K562 (cell line): ENCODE measurements at regions of chr2 and their contacts with region 1.

Region 1: DNA sequence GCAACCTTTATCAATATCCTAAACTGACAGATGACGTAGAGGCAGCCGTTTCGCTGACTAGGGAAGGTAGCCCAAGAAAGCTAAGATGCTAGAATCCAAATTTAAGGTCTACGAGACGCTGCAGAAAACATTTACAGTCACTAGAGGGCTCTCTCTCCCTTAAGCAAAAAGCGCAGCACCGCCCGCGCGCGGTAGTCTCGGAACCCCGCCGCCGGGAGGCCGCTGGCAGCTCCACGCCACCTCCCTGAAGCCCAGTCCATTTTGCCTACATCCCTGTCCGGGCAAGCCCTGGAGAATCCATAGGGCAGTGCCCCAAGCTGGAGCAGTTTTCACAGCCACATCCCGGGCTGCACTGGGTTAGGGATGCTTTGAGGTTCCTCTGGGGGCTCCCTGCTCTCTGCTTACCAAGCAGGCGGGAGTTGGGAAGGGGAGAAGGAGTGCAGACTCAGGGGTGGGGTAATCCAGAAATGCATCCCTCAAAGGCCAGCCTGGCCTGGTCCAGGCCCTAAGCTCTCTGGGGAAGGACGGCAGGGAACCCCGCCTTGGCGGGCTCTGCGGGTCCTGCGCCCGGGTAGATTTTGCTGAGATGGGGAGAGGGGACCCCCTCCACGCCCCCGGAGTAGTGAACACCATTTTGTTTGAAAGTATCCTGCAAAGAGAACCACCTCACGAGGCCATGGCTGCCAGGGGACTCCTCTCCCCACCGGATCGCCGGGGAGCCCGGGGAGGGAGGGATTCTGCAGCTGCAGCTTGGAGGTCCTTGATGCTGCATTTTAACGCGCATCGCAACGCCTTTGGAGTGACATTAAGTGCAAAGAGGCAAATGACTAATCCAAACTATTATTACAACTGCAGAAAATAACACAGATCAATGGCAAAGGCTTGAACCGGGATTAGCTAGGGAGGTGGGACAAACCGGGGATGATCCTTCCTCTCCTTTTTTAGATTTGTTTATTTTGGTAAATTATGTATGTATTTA is 1.3 kb upstream of the DPYSL5 start:
- DNase-seq: peak; percentile 64 to 83 (median 68)
- ATAC-seq: peak; percentile 94
- H3K4me3 ChIP-seq: no peak overlapping the region
- H3K27ac ChIP-seq: no peak overlapping the region
- H3K4me1 ChIP-seq: peaks cover 0 to 35% of the 10 kb centered on the region in 2 experiments; a peak in 2 of 5 replicates
- H3K27me3 ChIP-seq: peaks cover 49 to 70% of the 10 kb centered on the region in 2 experiments
- CTCF ChIP-seq: peak; percentile 86 to 96 (median 96)
- EP300 ChIP-seq: no peak
- POLR2A ChIP-seq: no peak
- RAD21 ChIP-seq: peak; percentile 89 to 90

Region 2: GRCh38 chr2:26577434-26578112 is 269.0 kb before region 1 on chr2:
- CTCF ChIA-PET with region 1: no interaction called
- POLR2A ChIA-PET with region 1: no interaction called
- in situ Hi-C with region 1: no loop called
- intact Hi-C with region 1: no loop called
- DNase-seq: peak; percentile 74 to 79 (median 78)
- ATAC-seq: peak; percentile 92
- H3K4me3 ChIP-seq: no peak overlapping the region
- H3K27ac ChIP-seq: no peak overlapping the region
- H3K4me1 ChIP-seq: no peaks in the 10 kb centered on the region; a peak in 1 of 5 replicates
- H3K27me3 ChIP-seq: peaks cover 39 to 96% of the 10 kb centered on the region in 2 experiments
- CTCF ChIP-seq: peak; percentile 89 to 94 (median 92)
- EP300 ChIP-seq: no peak
- POLR2A ChIP-seq: no peak
- RAD21 ChIP-seq: peak; percentile 88 to 92

Region 3: DNA sequence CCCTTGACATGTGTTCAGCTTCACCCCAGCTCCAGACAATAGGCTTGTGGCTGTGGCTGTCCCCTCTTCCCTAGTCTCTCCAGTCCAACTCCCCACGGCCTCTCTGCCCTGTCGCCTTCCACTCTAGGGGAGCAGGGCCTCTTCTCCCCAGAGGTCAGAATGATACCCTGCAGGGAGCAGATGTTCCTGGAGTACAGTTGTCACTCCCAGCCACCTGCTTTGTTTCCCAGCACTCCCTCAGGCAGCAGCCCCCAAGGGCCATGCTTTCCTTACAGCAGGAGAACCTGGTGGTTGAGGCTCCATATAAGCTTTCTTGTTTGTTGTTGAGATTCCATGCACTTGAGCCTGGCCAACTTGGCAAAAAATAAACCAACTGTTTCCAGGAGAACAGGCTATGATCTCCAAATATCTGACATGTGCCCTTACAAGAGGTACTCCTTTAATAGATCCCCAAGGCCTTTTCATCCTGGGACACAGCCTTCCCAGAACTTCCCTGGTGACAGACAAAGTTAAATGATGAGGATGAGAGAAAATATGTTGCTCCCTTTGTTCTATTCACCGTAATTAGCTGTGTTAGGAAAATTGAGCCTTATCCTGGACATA is 46.4 kb after region 1 on chr2:
- CTCF ChIA-PET with region 1: no interaction called
- POLR2A ChIA-PET with region 1: no interaction called
- in situ Hi-C with region 1: no loop called
- intact Hi-C with region 1: no loop called
- DNase-seq: no peak
- ATAC-seq: no peak
- H3K4me3 ChIP-seq: no peak overlapping the region
- H3K27ac ChIP-seq: no peak overlapping the region
- H3K4me1 ChIP-seq: no peaks in the 10 kb centered on the region
- H3K27me3 ChIP-seq: peaks cover 24 to 30% of the 10 kb centered on the region in 2 experiments; a peak in 4 of 5 replicates
- CTCF ChIP-seq: no peak
- EP300 ChIP-seq: no peak
- POLR2A ChIP-seq: no peak
- RAD21 ChIP-seq: no peak

Region 4: DNA sequence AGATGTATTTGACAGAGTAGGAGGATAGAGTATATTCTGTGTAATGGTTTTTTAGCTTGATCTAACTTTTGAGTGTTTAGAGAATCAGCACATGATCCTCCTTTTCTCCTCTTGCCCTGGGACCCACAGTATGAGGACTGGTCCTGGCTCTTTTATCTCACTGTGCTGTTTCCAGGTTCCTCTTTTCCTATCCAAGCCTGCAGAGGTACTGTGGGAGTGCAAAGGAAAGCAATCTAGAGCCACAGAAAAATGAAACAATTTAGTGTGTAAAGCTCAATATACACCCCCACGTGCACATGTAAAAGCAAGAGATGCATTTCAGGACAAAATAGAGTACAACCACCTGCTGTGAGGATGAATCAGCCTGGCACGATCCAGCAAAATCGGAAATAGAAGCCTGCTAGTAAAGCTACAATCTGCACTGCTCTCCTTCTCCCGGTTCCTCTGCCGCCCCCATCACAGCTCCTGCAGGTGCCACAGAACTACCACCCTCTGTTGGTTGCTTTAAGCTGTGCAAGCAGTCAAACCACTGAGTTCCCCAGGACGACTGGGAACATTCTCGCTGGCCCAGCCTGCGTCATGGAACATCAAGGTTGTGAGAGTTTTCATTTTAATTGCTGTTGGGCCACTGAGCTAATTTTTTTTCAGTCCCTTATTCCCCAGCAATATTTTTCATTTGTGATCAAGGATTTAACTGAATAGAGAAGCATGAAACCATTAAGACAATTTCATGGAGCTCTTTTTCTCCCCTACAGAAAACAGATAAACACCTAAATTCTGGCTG is 76.0 kb after region 1 on chr2:
- CTCF ChIA-PET with region 1: interaction called, 4 read pairs
- POLR2A ChIA-PET with region 1: interaction called, 6 read pairs
- in situ Hi-C with region 1: no loop called
- intact Hi-C with region 1: loop called (anchors 5 kb)
- DNase-seq: peak; percentile 54 to 69 (median 58)
- ATAC-seq: peak; percentile 96
- H3K4me3 ChIP-seq: no peak overlapping the region
- H3K27ac ChIP-seq: no peak overlapping the region
- H3K4me1 ChIP-seq: no peaks in the 10 kb centered on the region
- H3K27me3 ChIP-seq: peaks cover 37 to 43% of the 10 kb centered on the region in 2 experiments
- CTCF ChIP-seq: peak; percentile 64 to 87 (median 70)
- EP300 ChIP-seq: no peak
- POLR2A ChIP-seq: no peak
- RAD21 ChIP-seq: peak; percentile 38 to 60

Region 5: DNA sequence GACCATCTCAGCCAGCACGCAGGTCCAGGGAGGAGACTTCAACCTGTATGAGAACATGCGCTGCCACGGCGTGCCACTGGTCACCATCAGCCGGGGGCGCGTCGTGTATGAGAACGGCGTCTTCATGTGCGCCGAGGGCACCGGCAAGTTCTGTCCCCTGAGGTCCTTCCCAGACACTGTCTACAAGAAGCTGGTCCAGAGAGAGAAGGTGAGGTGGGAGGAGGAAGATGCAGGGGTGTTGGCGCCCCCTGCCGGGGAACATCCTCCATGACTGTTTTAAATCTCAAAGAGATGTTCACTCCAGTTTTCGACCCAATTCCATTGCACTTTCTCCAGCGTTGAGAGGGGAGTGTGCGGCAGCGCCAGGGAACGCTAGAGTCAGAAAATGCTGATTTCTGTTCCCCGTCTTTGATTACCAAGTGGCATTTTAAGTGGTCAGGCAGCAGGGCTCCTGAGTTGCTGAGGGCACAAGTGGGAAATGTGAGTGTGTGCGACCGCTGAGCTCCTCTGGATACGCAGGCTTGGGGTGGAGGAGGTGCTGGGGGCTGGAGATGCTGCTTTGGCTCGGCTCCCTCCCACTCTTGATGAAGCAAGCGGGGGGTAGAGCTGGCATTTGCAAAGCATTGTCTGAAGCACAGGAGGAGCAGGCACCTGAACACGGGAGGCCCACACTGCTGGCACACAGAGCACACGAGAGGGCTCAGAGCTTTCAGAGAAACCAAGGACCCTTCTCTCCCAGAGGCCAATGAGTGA is 96.1 kb after region 1 on chr2:
- CTCF ChIA-PET with region 1: interaction called, 19 read pairs
- POLR2A ChIA-PET with region 1: no interaction called
- in situ Hi-C with region 1: loop called (anchors 10 kb)
- intact Hi-C with region 1: loop called (anchors 1 kb)
- DNase-seq: peak; percentile 82 to 84 (median 84)
- ATAC-seq: peak; percentile 83
- H3K4me3 ChIP-seq: no peak overlapping the region
- H3K27ac ChIP-seq: no peak overlapping the region
- H3K4me1 ChIP-seq: peaks cover 0 to 21% of the 10 kb centered on the region in 2 experiments; a peak in 4 of 5 replicates
- H3K27me3 ChIP-seq: peaks cover 11 to 40% of the 10 kb centered on the region in 2 experiments; a peak in 4 of 5 replicates
- CTCF ChIP-seq: peak; percentile 84 to 94 (median 89)
- EP300 ChIP-seq: no peak
- POLR2A ChIP-seq: no peak
- RAD21 ChIP-seq: peak; percentile 61 to 84

Region 6: GRCh38 chr2:27079233-27080139 is 232.9 kb after region 1 on chr2:
- CTCF ChIA-PET with region 1: no interaction called
- POLR2A ChIA-PET with region 1: no interaction called
- in situ Hi-C with region 1: no loop called
- intact Hi-C with region 1: loop called (anchors 2 kb)
- DNase-seq: no peak
- ATAC-seq: no peak
- H3K4me3 ChIP-seq: no peak overlapping the region
- H3K27ac ChIP-seq: no peak overlapping the region
- H3K4me1 ChIP-seq: peaks cover 63 to 65% of the 10 kb centered on the region in 2 experiments
- H3K27me3 ChIP-seq: no peaks in the 10 kb centered on the region
- CTCF ChIP-seq: no peak
- EP300 ChIP-seq: no peak
- POLR2A ChIP-seq: no peak
- RAD21 ChIP-seq: no peak

Region 7: DNA sequence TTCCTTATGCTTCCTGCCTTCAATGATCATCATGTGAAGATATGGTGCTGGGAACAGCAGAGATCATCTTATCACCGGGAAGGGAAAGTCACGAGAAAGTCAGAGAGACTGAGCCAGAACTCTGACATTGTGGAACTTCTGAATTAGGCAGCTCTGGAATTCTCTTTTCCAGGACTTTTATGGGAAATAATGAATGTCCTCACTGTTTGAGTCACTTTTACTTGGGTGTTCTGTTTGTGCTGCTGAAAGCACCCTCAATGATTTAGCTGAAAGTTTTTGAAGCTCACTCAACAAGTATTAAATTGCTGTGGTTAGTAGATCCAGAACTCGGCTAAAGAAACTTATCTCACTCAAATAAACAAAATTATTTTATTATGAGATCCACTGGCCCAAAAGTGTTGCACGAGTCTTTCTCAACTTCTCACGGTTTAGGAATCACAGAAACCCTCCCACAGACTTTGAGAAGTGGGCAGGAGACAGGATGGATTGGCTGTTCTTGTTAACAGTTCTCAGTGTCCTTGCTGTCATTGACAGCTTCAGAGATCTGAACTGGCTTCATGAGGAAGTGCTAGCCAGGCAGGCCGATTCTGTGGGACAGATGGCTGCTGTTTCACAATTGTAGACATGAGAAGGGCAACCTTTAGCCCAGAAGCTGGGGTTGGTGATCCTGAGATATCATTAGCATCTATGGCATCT is 338.9 kb after region 1 on chr2:
- CTCF ChIA-PET with region 1: no interaction called
- POLR2A ChIA-PET with region 1: no interaction called
- in situ Hi-C with region 1: no loop called
- intact Hi-C with region 1: loop called (anchors 10 kb)
- DNase-seq: peak in 2 of 4 experiments; percentile 11 to 35
- ATAC-seq: peak; percentile 67
- H3K4me3 ChIP-seq: no peak overlapping the region
- H3K27ac ChIP-seq: peak overlapping the region; percentile 17; the same call in 1 of the 3 replicates
- H3K4me1 ChIP-seq: peaks cover 0 to 10% of the 10 kb centered on the region in 2 experiments; a peak in 3 of 5 replicates
- H3K27me3 ChIP-seq: peaks cover 0 to 4% of the 10 kb centered on the region in 2 experiments; a peak in 1 of 5 replicates
- CTCF ChIP-seq: no peak
- EP300 ChIP-seq: no peak
- POLR2A ChIP-seq: no peak
- RAD21 ChIP-seq: no peak

Region 8: GRCh38 chr2:27281855-27282559 is 435.4 kb after region 1 on chr2 and contains the start of gene TRIM54:
- CTCF ChIA-PET with region 1: interaction called, 7 read pairs
- POLR2A ChIA-PET with region 1: no interaction called
- in situ Hi-C with region 1: no loop called
- intact Hi-C with region 1: loop called (anchors 10 kb)
- DNase-seq: no peak
- ATAC-seq: peak; percentile 37; the same call in 1 of the 3 replicates
- H3K4me3 ChIP-seq: no peak within 1 kb of the TSS
- H3K27ac ChIP-seq: no peak within 1 kb of the TSS
- H3K4me1 ChIP-seq: peaks cover 6 to 17% of the 10 kb centered on the region in 2 experiments
- H3K27me3 ChIP-seq: peaks cover 0 to 4% of the 10 kb centered on the region in 2 experiments; a peak in 1 of 5 replicates
- CTCF ChIP-seq: no peak
- EP300 ChIP-seq: no peak
- POLR2A ChIP-seq: no peak
- RAD21 ChIP-seq: no peak
- polyA plus RNA-seq, gene TRIM54: not detected

Region 9: DNA sequence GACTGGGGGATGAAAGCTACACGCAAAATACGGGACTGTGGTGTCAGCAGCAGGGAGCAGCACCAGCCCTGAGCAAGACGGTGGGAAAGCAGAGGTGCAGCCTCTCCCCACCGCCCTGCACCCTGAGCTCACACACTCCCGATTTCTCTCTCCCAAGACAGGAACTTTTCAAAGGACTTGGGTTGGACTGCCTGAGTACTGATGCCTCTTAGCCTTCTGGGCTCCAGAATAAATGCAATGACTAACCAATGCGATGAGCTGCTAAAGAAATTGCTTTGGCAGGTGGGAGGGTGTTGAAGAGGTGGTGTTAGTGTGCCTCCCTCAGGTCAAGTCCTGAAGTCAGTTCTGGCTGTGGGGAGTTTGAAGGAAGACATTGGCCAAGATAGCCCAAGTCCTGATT is 445.2 kb after region 1 on chr2:
- CTCF ChIA-PET with region 1: no interaction called
- POLR2A ChIA-PET with region 1: interaction called, 4 read pairs
- in situ Hi-C with region 1: loop called (anchors 10 kb)
- intact Hi-C with region 1: loop called (anchors 10 kb)
- DNase-seq: peak in 2 of 4 experiments; percentile 59 to 61
- ATAC-seq: peak; percentile 88
- H3K4me3 ChIP-seq: no peak overlapping the region
- H3K27ac ChIP-seq: no peak overlapping the region
- H3K4me1 ChIP-seq: peaks cover 4 to 12% of the 10 kb centered on the region in 2 experiments
- H3K27me3 ChIP-seq: no peaks in the 10 kb centered on the region
- CTCF ChIP-seq: peak; percentile 57 to 64 (median 58)
- EP300 ChIP-seq: no peak
- POLR2A ChIP-seq: no peak
- RAD21 ChIP-seq: peak; percentile 53 to 83